ENCODE measurements at regions of chr11 and their contacts with region 1.

Region 1: GRCh38 chr11:11966826-11967668 is 41.4 kb downstream of the DKK3 start:
- DNase-seq: peak; percentile 87
- ATAC-seq: peak; percentile 98
- H3K4me3 Mint-ChIP-seq: no peak overlapping the region
- H3K27ac Mint-ChIP-seq: no peak overlapping the region
- H3K4me1 Mint-ChIP-seq: peaks cover 4% of the 10 kb centered on the region
- H3K27me3 Mint-ChIP-seq: no peaks in the 10 kb centered on the region
- CTCF ChIP-seq: peak; percentile 81

Region 2: DNA sequence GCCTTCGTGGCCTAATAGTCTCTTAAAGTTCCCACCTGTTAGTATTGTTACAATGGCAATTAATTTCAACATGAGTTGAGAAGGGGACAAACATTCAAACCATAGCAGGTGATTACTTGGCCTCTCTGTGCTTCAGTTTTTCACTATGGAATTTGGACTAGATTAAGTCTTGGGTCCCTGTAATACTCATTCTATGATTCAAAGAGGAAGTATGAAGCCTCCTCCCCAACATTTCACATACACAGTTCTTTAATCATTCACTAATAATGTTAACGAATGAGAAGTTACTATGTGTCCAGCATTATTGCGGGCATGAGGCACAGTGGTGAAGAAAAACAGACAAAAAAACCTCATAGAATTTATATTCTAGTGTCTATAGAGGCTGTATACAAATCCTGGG is 145.1 kb before region 1 on chr11:
- CTCF ChIA-PET with region 1: no interaction called
- POLR2A ChIA-PET with region 1: no interaction called
- intact Hi-C with region 1: no loop called
- DNase-seq: no peak
- ATAC-seq: no peak
- H3K4me3 Mint-ChIP-seq: no peak overlapping the region
- H3K27ac Mint-ChIP-seq: no peak overlapping the region
- H3K4me1 Mint-ChIP-seq: no peaks in the 10 kb centered on the region
- H3K27me3 Mint-ChIP-seq: peaks cover 1% of the 10 kb centered on the region
- CTCF ChIP-seq: no peak

Region 3: DNA sequence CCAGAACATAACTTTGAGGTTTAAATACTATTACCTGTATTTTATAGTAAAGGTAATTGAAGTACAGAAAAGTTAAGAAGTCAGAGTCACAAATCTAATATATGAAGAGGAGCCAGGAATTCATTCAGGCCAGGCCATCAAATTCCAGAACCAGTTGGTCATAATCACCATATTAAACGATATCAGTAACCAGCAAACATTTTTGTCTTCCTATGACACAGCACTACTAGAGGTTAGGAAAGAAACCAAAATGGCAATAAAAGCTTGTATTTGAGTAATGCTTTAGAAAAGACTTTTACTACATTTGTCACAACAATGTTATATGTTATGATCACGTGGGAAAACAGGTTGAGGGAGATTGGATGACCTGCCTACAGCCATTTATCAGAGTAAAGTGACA is 20.9 kb before region 1 on chr11:
- CTCF ChIA-PET with region 1: interaction called, 21 read pairs
- POLR2A ChIA-PET with region 1: no interaction called
- intact Hi-C with region 1: no loop called
- DNase-seq: no peak
- ATAC-seq: no peak
- H3K4me3 Mint-ChIP-seq: no peak overlapping the region
- H3K27ac Mint-ChIP-seq: no peak overlapping the region
- H3K4me1 Mint-ChIP-seq: no peaks in the 10 kb centered on the region
- H3K27me3 Mint-ChIP-seq: no peaks in the 10 kb centered on the region
- CTCF ChIP-seq: no peak

Region 4: DNA sequence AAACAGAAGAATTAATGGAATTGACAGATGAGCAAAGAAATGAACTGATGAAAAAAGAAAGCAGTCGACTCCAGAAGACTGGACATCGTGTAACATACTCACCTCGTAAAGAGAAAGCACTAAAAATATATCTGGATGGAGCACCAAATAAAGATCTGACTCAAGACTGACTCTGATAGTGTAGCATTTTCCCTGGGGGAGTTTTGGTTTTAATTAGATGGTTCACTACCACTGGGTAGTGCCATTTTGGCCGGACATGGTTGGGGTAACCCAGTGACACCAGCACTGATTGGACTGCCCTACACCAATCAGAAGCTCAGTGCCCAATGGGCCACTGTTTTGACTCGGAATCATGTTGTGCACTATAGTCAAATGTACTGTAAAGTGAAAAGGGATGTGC is 11.0 kb before region 1 on chr11:
- CTCF ChIA-PET with region 1: interaction called, 11 read pairs
- POLR2A ChIA-PET with region 1: no interaction called
- intact Hi-C with region 1: no loop called
- DNase-seq: no peak
- ATAC-seq: no peak
- H3K4me3 Mint-ChIP-seq: no peak overlapping the region
- H3K27ac Mint-ChIP-seq: no peak overlapping the region
- H3K4me1 Mint-ChIP-seq: peaks cover 18% of the 10 kb centered on the region
- H3K27me3 Mint-ChIP-seq: no peaks in the 10 kb centered on the region
- CTCF ChIP-seq: no peak

Region 5: GRCh38 chr11:11977206-11977938 is 10.3 kb after region 1 on chr11:
- CTCF ChIA-PET with region 1: interaction called, 22 read pairs
- POLR2A ChIA-PET with region 1: interaction called, 6 read pairs
- intact Hi-C with region 1: no loop called
- DNase-seq: no peak
- ATAC-seq: no peak
- H3K4me3 Mint-ChIP-seq: no peak overlapping the region
- H3K27ac Mint-ChIP-seq: no peak overlapping the region
- H3K4me1 Mint-ChIP-seq: peaks cover 4% of the 10 kb centered on the region
- H3K27me3 Mint-ChIP-seq: no peaks in the 10 kb centered on the region
- CTCF ChIP-seq: no peak

Measured in activated CD8-positive, alpha-beta T cell treated with anti-CD3 and anti-CD28 coated beads for 36 hours (primary cell).